ENCODE measurements at regions of chr13 and their contacts with region 1.

Region 1: GRCh38 chr13:98658214-98658530 is 81.3 kb upstream of the STK24 start:
- DNase-seq: peak in 1 of 2 donors; percentile 48
- H3K4me3 ChIP-seq: no peak overlapping the region
- H3K27ac ChIP-seq: no peak overlapping the region
- H3K4me1 ChIP-seq: peaks cover 0 to 5% (median 1%) of the 10 kb centered on the region in 4 donors
- H3K27me3 ChIP-seq: no peaks in the 10 kb centered on the region
- CTCF ChIP-seq: no peak
- EP300 ChIP-seq: no peak
- POLR2A ChIP-seq: no peak

Region 2: GRCh38 chr13:98397221-98397620 is 261.0 kb before region 1 on chr13:
- intact Hi-C with region 1: no loop called
- DNase-seq: peak in 1 of 2 donors; percentile 51
- H3K4me3 ChIP-seq: no peak overlapping the region
- H3K27ac ChIP-seq: peak overlapping the region in 2 of 5 donors; percentile 8 to 20
- H3K4me1 ChIP-seq: peaks cover 0 to 26% (median 6%) of the 10 kb centered on the region in 4 donors
- H3K27me3 ChIP-seq: no peaks in the 10 kb centered on the region
- CTCF ChIP-seq: no peak
- EP300 ChIP-seq: no peak
- POLR2A ChIP-seq: no peak

Region 3: GRCh38 chr13:98445340-98446233 is 212.6 kb before region 1 on chr13:
- intact Hi-C with region 1: loop called (anchors 5 kb)
- DNase-seq: peak; percentile 79 to 87
- H3K4me3 ChIP-seq: no peak overlapping the region
- H3K27ac ChIP-seq: peak overlapping the region in 3 of 5 donors; percentile 55 to 76 (median 66)
- H3K4me1 ChIP-seq: peaks cover 0 to 28% (median 17%) of the 10 kb centered on the region in 4 donors
- H3K27me3 ChIP-seq: no peaks in the 10 kb centered on the region
- CTCF ChIP-seq: peak in 5 of 7 experiments; percentile 90 to 97 (median 96)
- EP300 ChIP-seq: no peak
- POLR2A ChIP-seq: no peak

Measured in stomach (tissue), 19 donors.